Motor neuron (in vitro differentiated cells): ENCODE measurements at regions of chr19 and their contacts with region 1.

Region 1: GRCh38 chr19:49391581-49392399 is 3.7 kb downstream of the KASH5 start:
- ATAC-seq: peak; percentile 90 to 98 (median 96)
- H3K4me3 ChIP-seq: no peak overlapping the region
- H3K27ac ChIP-seq: no peak overlapping the region
- H3K4me1 ChIP-seq: peaks cover 8% of the 10 kb centered on the region in 2 donors

Region 2: GRCh38 chr19:49443366-49444099 is 51.7 kb after region 1 on chr19:
- in situ Hi-C with region 1: loop called in 2 of 9 experiments (anchors 10 kb)
- ATAC-seq: peak; percentile 80 to 91 (median 86)
- H3K4me3 ChIP-seq: peak overlapping the region; percentile 32 to 40 (median 34)
- H3K27ac ChIP-seq: peak overlapping the region in 1 of 2 donors; percentile 65
- H3K4me1 ChIP-seq: peaks cover 10 to 12% of the 10 kb centered on the region in 2 donors

Region 3: GRCh38 chr19:49533551-49534488 is 142.0 kb after region 1 on chr19:
- in situ Hi-C with region 1: loop called in 1 of 9 experiments (anchors 25 kb)
- ATAC-seq: peak; percentile 85 to 95 (median 88)
- H3K4me3 ChIP-seq: peak overlapping the region; percentile 42 to 60 (median 57)
- H3K27ac ChIP-seq: peak overlapping the region in 1 of 2 donors; percentile 15
- H3K4me1 ChIP-seq: no peaks in the 10 kb centered on the region